Prostate gland (tissue), 2 donors: ENCODE measurements at regions of chr17 and their contacts with region 1.

Region 1: DNA sequence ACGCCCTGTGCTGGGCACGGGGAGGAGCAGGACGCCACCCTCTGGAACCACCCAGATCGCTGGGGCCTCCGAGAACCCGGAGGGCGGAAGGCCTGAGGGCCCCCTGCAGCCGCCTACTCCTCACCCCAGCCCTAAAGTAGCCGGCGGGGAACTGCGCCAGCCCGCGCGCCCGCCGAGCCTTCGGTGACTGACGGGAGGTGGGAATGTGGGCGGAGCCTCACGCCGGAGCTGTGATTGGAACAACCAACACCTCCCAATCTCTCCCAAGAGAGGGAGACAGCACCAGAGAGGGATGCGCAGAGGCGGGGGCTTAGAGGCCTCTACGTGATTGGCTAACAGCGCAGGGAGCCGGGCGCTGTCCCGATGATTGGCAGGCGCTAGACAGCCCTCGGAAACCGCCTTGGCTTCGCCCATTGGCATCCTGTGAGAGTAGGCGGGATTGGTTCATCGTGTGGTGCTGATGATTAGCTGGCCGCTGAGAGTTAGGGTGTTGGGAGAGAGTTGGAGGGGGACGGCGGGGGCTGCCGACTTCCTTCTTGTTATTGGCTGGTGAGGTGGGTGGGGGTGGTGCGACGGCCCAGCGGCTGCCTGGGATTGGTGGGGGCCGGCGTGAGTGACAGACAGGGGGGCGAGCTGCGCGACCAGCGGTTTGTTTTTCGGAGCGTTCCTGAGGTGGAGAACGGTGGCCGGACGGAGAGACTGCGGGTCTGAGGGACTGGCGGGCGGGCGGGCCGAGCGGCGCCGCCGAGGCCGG is at the start of gene MAP3K3:
- DNase-seq: peak; percentile 100
- H3K4me3 ChIP-seq: peak within 1 kb of the TSS; percentile 55 to 78
- H3K27ac ChIP-seq: peak within 1 kb of the TSS; percentile 80 to 87
- H3K4me1 ChIP-seq: peaks cover 10% of the 10 kb centered on the region
- H3K27me3 ChIP-seq: no peaks in the 10 kb centered on the region
- CTCF ChIP-seq: peak in 2 of 4 experiments; percentile 39 to 57
- POLR2A ChIP-seq: peak; percentile 86
- total RNA-seq, gene MAP3K3: 44.0 to 72.0 TPM

Region 2: DNA sequence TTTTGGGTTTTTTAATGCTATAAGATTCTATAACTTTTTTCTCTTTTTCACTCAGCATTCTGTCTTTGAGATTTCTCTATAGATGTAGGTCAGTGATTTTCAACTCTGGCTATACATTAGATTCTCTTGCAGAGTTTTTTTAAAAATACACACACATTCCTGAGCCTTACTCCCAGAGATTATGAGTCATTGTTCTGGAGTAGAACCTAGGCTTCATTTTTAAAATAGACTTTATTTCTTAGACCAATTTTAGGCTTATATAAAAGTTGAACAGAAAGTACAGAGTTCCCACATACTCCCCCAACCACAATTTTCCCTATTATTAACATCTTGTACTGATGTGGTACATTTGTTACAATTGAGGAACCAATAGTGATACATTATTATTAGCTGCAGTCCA is 239.1 kb before region 1 on chr17:
- intact Hi-C with region 1: no loop called
- DNase-seq: no peak
- H3K4me3 ChIP-seq: no peak overlapping the region
- H3K27ac ChIP-seq: no peak overlapping the region
- H3K4me1 ChIP-seq: no peaks in the 10 kb centered on the region
- H3K27me3 ChIP-seq: no peaks in the 10 kb centered on the region
- CTCF ChIP-seq: no peak
- POLR2A ChIP-seq: no peak

Region 3: GRCh38 chr17:63549946-63550807 is 71.8 kb before region 1 on chr17 and contains the start of gene DCAF7:
- intact Hi-C with region 1: loop called (anchors 5 kb)
- DNase-seq: peak; percentile 100
- H3K4me3 ChIP-seq: peak within 1 kb of the TSS; percentile 73 to 84
- H3K27ac ChIP-seq: peak within 1 kb of the TSS; percentile 81 to 83
- H3K4me1 ChIP-seq: peaks cover 4% of the 10 kb centered on the region
- H3K27me3 ChIP-seq: no peaks in the 10 kb centered on the region
- CTCF ChIP-seq: peak in 2 of 4 experiments; percentile 7 to 20
- POLR2A ChIP-seq: peak; percentile 65
- total RNA-seq, gene DCAF7: 48.9 to 68.6 TPM

Region 4: GRCh38 chr17:63697341-63698286 is 75.7 kb after region 1 on chr17:
- intact Hi-C with region 1: loop called (anchors 5 kb)
- DNase-seq: no peak
- H3K4me3 ChIP-seq: no peak overlapping the region
- H3K27ac ChIP-seq: peak overlapping the region; percentile 68 to 77
- H3K4me1 ChIP-seq: no peaks in the 10 kb centered on the region
- H3K27me3 ChIP-seq: no peaks in the 10 kb centered on the region
- CTCF ChIP-seq: peak in 3 of 4 experiments; percentile 42 to 58 (median 49)
- POLR2A ChIP-seq: no peak

Region 5: DNA sequence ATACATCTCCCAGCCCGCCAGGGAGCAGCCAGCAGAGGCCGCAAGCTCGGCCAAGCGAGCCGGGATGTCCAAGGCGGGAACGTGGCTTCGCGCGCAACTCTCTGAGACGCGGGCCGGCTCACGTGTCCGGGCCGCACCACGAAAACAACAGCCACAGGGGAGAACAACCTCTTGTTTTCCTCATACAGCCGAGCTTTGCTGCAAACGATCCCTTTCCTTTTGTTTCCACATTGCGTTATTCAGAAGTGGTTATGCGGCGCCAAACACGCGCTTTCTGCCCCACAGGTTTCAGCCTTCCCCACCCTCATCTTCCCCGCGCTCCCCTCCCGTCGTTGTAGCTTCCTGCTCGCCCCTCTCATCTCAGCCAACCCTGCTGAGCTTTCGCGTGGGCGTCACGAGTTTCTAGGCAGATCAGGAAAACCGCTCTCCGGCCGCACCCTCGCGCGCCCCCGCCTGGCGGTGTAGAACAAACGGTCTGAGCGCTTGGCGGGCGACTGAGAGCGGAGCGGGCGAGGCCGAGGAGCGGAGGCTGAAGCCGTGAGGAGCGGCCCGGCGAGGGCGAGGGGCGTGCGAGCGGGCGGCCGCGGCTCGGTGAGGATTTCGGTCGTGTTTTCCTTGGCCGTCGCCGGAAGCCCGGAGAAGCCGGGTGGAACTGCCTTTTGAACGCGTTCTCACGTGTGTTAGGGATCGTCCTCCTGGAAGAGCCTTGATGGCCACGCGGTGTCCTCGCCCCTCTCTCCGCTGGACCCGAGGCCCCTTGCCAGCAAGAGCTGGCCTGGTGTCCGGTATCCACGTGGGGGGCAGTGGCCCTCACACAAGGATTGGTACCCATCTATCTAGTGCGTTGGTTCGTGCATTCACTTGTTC is 227.1 kb after region 1 on chr17:
- intact Hi-C with region 1: loop called (anchors 5 kb)
- DNase-seq: peak; percentile 80
- H3K4me3 ChIP-seq: peak overlapping the region; percentile 10 to 23
- H3K27ac ChIP-seq: peak overlapping the region in 1 of 2 donors; percentile 36
- H3K4me1 ChIP-seq: no peaks in the 10 kb centered on the region
- H3K27me3 ChIP-seq: no peaks in the 10 kb centered on the region
- CTCF ChIP-seq: peak; percentile 48 to 83 (median 70)
- POLR2A ChIP-seq: no peak